ENCODE measurements at regions of chr1 and their contacts with region 1.

Region 1: GRCh38 chr1:45303582-45304310 is 22.9 kb upstream of the HPDL start:
- DNase-seq: peak; percentile 96
- H3K4me3 ChIP-seq: peak overlapping the region; percentile 74
- H3K27ac ChIP-seq: peak overlapping the region; percentile 79
- H3K4me1 ChIP-seq: peaks cover 31% of the 10 kb centered on the region
- CTCF ChIP-seq: peak; percentile 83

Region 2: GRCh38 chr1:44792783-44793714 is 510.7 kb before region 1 on chr1:
- CTCF ChIA-PET with region 1: no interaction called
- POLR2A ChIA-PET with region 1: no interaction called
- intact Hi-C with region 1: loop called (anchors 5 kb)
- DNase-seq: no peak
- H3K4me3 ChIP-seq: no peak overlapping the region
- H3K27ac ChIP-seq: no peak overlapping the region
- H3K4me1 ChIP-seq: no peaks in the 10 kb centered on the region
- CTCF ChIP-seq: no peak

Region 3: DNA sequence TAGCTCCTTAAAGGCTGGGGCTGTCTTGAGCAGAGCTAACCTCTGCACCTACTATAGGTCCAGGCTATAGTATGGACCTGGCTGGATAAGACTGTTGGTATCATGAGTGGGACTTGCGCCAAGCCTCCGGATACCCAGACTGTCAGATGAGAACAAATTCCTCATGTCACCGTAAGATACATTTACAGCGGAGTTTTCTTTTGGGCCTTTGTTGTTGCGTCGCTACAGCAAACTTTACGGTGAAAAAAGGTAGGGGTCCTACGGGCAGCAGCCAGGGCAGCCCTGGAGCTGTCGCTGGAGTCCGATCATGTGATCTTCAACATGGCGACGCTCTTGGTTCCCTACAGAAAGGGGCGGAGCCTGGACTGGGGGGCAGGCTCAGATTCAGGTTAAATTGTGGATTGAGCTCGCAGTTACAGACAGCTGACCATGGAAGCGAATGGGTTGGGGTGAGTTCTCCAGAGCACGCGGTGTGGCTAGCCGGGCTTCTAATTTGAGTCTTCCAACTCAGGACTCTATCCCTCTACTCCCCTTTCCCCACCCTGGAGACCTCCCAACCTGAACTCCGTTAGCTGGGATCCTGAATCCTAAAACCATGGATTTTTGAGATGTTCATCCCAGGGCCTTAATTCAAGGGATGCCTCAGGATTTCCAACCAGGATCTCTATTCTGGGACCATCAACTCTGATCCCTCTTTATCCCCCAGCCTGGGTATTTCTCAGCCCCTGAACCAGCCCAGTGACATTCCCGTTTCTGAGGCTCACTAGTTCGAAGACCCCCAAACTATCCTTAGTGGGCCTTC is 291.7 kb before region 1 on chr1 and contains the start of gene UROD:
- CTCF ChIA-PET with region 1: interaction called, 16 read pairs
- POLR2A ChIA-PET with region 1: interaction called, 24 read pairs
- intact Hi-C with region 1: loop called (anchors 1 kb)
- DNase-seq: peak; percentile 97
- H3K4me3 ChIP-seq: peak within 1 kb of the TSS; percentile 83
- H3K27ac ChIP-seq: peak within 1 kb of the TSS; percentile 49
- H3K4me1 ChIP-seq: peaks cover 20% of the 10 kb centered on the region
- CTCF ChIP-seq: no peak
- total RNA-seq, gene UROD: 57.4 and 73.5 TPM in 2 replicates

Region 4: GRCh38 chr1:45059829-45060228 is 243.9 kb before region 1 on chr1:
- CTCF ChIA-PET with region 1: no interaction called
- POLR2A ChIA-PET with region 1: no interaction called
- intact Hi-C with region 1: no loop called
- DNase-seq: no peak
- H3K4me3 ChIP-seq: no peak overlapping the region
- H3K27ac ChIP-seq: no peak overlapping the region
- H3K4me1 ChIP-seq: peaks cover 8% of the 10 kb centered on the region
- CTCF ChIP-seq: no peak

Region 5: GRCh38 chr1:45317166-45317565 is 13.4 kb after region 1 on chr1:
- CTCF ChIA-PET with region 1: interaction called, 10 read pairs
- POLR2A ChIA-PET with region 1: interaction called, 15 read pairs
- intact Hi-C with region 1: no loop called
- DNase-seq: no peak
- H3K4me3 ChIP-seq: no peak overlapping the region
- H3K27ac ChIP-seq: no peak overlapping the region
- H3K4me1 ChIP-seq: peaks cover 8% of the 10 kb centered on the region
- CTCF ChIP-seq: no peak

Region 6: DNA sequence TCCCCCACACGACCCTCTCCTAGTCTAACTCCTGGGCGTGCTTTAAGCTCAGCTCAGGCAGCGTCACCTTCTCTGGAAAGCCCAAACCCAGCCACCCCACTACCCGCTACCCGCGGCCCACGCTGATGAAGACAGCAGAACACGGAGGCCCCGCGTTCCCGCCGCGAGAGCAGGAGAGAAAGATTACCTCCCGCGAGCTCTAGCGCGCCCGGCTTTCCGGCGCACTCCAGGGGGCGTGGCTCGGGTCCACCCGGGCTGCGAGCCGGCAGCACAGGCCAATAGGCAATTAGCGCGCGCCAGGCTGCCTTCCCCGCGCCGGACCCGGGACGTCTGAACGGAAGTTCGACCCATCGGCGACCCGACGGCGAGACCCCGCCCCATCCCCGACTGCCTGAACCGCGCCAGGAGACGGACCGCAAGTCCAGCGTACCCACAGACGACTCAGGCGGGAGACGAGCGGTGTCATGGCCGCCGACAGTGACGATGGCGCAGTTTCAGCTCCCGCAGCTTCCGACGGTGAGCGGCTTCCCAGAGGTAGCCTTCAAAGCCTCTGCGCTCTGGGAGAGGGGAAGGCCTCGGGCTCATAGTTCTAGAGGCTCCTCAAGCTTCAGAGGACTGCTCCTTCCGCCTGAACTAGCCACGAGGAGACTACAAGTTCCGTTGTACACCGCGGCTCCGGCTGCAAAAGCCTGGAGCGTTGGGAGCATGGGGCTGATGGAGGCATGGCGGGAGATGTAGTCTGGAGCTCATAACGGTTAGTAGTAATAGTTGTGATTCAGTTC is 36.2 kb after region 1 on chr1 and contains the starts of genes MUTYH and TOE1:
- CTCF ChIA-PET with region 1: interaction called, 8 read pairs
- POLR2A ChIA-PET with region 1: interaction called, 18 read pairs
- intact Hi-C with region 1: loop called (anchors 1 kb)
- DNase-seq: peak; percentile 95
- H3K4me3 ChIP-seq: peak within 1 kb of the TSS; percentile 81
- H3K27ac ChIP-seq: peak within 1 kb of the TSS; percentile 85
- H3K4me1 ChIP-seq: peaks cover 28% of the 10 kb centered on the region
- CTCF ChIP-seq: no peak
- total RNA-seq, gene MUTYH: 46.6 and 52.6 TPM in 2 replicates
- total RNA-seq, gene TOE1: 23.7 and 30.2 TPM in 2 replicates

Region 7: DNA sequence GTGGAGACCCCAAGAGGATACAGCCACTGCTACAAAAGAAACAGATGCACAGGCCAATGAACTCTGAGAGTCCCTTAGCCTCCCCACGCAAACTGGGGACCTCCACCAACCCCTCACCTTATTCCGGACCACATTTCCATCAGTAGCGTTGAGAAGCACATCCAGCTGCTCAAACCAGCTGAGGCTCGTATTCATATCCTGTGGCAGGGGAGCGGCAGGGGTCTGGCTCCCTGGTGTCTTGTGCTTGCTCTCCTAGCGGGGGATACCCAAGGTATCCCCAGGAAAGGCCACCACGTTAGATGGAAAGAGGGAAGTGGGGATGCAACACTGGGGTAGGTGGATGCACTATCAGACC is 195.6 kb after region 1 on chr1:
- CTCF ChIA-PET with region 1: interaction called, 14 read pairs
- POLR2A ChIA-PET with region 1: interaction called, 5 read pairs
- intact Hi-C with region 1: no loop called
- DNase-seq: peak; percentile 59
- H3K4me3 ChIP-seq: peak overlapping the region; percentile 86
- H3K27ac ChIP-seq: peak overlapping the region; percentile 54
- H3K4me1 ChIP-seq: peaks cover 21% of the 10 kb centered on the region
- CTCF ChIP-seq: no peak